Posterior cingulate gyrus (tissue), 11 donors: ENCODE measurements at regions of chr12 and their contacts with region 1.

Region 1: DNA sequence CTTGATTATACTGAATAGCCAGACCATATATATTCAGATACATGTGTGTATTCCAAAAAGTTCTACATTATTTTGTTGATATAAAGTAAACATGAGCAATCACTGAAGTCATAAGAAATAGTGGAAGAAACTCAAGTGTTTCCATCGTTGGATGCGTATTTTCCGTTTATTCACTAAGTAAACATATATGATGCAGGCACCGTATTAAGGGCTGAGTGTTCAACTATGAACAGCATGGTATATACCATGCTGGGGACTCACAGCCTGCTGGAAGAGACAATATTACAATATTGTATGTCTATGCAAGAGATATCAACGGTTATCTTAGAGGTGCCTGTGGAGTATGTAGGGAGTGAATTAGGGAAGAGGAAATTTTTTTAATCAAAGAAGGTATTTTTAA is 1.2 kb downstream of the PYROXD1 start:
- DNase-seq: no peak

Region 2: GRCh38 chr12:21169878-21170472 is 268.7 kb before region 1 on chr12:
- intact Hi-C with region 1: no loop called
- DNase-seq: peak in 1 of 10 donors; percentile 18

Region 3: DNA sequence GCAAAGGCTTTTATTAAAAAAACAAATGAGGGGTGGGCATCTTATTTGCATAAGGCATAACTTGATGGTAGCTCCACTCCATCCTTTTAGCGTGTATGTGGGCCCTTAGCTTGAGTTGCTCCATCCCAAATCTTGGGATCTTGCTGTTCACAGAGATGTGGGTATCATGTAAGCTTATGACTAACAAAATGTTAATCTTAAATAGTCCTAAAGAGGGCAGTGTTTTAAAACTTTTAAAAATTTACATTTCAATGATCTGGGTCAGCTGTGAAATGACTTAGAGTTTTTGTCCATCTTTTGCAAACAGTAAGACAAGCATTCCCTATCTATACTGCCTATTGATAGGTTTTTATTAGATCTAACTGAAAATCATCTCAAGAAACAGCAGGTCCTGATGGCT is 190.0 kb before region 1 on chr12:
- intact Hi-C with region 1: loop called (anchors 5 kb)
- DNase-seq: no peak

Region 4: DNA sequence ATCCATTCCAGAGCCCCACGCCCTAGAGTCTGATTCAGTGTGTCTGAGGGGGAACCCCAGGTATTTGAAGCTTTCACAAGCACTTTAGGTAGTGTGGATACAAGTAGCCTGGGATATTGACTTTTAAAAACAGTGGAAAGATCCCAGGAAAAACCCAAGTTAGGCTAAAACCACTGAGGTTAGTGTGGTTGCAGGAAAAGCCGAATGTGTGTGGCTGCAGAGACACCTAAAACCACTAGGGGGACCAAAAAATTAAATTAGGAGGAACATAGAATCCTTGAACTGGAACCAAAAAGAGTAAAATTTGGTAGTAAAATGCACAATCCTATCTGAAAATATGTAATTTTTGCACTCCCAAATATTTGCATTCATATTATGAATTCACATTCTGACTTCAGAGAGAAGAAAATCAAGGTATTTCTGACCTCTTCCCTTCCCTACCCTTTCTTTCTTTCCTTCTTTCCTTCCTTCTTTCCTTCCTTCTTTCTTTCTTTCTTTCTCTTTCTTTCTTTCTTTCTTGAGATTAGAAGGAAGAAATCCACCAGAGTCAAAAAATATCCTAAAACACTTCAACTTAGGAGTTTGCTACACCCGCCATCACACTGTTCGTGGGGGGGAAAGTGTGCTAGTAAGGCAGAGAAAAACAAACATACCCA is 141.8 kb before region 1 on chr12:
- intact Hi-C with region 1: no loop called
- DNase-seq: no peak

Region 5: DNA sequence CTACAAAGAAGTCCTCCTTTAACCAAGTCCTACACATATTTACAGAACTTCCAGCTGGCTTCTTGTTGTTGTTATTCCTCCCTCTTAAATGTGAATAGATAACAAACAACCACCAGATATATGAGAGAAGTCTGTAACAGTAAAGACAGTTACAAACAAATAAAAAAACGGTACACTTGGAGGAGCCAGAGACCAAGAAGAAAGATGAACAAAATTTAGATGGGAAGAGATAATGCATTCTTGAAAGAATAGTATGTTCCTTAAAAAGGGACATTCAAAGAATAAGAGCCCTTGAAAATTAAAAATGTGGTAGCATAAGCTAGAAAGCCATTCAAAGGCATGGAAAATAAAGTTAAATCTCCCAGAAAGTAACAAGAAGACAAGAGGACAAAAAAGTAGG is 129.9 kb before region 1 on chr12:
- intact Hi-C with region 1: loop called (anchors 2 kb)
- DNase-seq: no peak